ENCODE measurements at regions of chr15 and their contacts with region 1.

Region 1: GRCh38 chr15:34297059-34297458 is 40.5 kb downstream of the SLC12A6 start:
- DNase-seq: no peak
- H3K4me3 ChIP-seq: no peak overlapping the region
- H3K27ac ChIP-seq: no peak overlapping the region
- H3K4me1 ChIP-seq: no peaks in the 10 kb centered on the region
- H3K27me3 ChIP-seq: no peaks in the 10 kb centered on the region
- CTCF ChIP-seq: no peak

Region 2: GRCh38 chr15:34203936-34204335 is 93.1 kb before region 1 on chr15:
- CTCF ChIA-PET with region 1: no interaction called
- dilution Hi-C with region 1: loop called (anchors 5 kb)
- in situ Hi-C with region 1: no loop called
- intact Hi-C with region 1: no loop called
- DNase-seq: peak; percentile 92
- H3K4me3 ChIP-seq: no peak overlapping the region
- H3K27ac ChIP-seq: peak overlapping the region; percentile 64
- H3K4me1 ChIP-seq: peaks cover 30% of the 10 kb centered on the region
- H3K27me3 ChIP-seq: no peaks in the 10 kb centered on the region
- CTCF ChIP-seq: no peak

Region 3: DNA sequence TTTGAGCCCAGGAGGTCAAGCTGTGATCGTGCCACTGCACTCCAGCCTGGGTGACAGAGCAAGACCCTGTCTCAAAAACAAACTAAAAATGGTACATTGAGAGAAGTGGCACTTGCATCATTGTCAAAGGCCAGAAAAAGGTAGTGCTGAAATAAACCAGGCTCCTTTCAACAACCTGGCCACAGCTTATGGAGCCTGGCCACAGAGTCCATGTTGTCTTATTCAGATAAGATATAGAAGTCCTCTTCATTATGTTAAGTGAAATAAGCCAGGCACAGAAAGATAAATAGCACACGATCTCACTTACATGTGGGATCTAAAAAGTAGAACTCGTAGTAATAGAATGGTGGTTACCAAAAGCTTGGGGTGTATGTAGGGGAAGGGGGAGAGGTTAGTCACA is 37.5 kb before region 1 on chr15:
- CTCF ChIA-PET with region 1: no interaction called
- dilution Hi-C with region 1: no loop called
- in situ Hi-C with region 1: no loop called
- intact Hi-C with region 1: loop called (anchors 5 kb)
- DNase-seq: no peak
- H3K4me3 ChIP-seq: no peak overlapping the region
- H3K27ac ChIP-seq: no peak overlapping the region
- H3K4me1 ChIP-seq: no peaks in the 10 kb centered on the region
- H3K27me3 ChIP-seq: no peaks in the 10 kb centered on the region
- CTCF ChIP-seq: no peak

Region 4: DNA sequence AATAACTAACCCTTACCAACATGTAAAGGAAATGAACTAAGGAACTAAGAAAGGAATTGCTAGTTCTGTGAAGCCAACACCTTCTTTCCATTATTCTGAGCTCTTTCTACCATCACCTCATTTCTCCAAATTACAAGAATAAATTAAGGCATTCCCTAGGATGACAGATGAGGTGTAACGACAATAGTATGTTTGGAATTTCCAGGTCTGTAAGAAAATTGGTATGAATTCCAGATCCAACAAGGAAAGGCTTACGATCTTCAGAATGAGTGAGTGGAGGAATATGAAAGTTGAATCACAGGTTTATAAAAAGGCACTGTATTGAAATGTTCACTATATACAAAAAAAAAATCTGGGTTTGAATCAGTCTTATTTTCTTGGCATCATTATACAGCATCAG is 792.5 kb after region 1 on chr15:
- CTCF ChIA-PET with region 1: no interaction called
- dilution Hi-C with region 1: no loop called
- in situ Hi-C with region 1: no loop called
- intact Hi-C with region 1: no loop called
- DNase-seq: no peak
- H3K4me3 ChIP-seq: no peak overlapping the region
- H3K27ac ChIP-seq: no peak overlapping the region
- H3K4me1 ChIP-seq: no peaks in the 10 kb centered on the region
- H3K27me3 ChIP-seq: no peaks in the 10 kb centered on the region
- CTCF ChIP-seq: no peak

Measured in mammary epithelial cell (primary cell).